Activated CD8-positive, alpha-beta memory T cell treated with anti-CD3 and anti-CD28 coated beads, Interleukin-2, amount 10 ng/mL, durations not matched to agents 7 days and 5 days (primary cell): ENCODE measurements at regions of chr1 and their contacts with region 1.

Region 1: GRCh38 chr1:12124693-12125421 is 41.9 kb upstream of the TNFRSF1B start:
- DNase-seq: peak; percentile 83
- ATAC-seq: peak; percentile 69
- H3K4me3 Mint-ChIP-seq: no peak overlapping the region
- H3K27ac Mint-ChIP-seq: peak overlapping the region; percentile 55
- H3K4me1 Mint-ChIP-seq: peaks cover 17% of the 10 kb centered on the region
- H3K27me3 Mint-ChIP-seq: no peaks in the 10 kb centered on the region

Region 2: DNA sequence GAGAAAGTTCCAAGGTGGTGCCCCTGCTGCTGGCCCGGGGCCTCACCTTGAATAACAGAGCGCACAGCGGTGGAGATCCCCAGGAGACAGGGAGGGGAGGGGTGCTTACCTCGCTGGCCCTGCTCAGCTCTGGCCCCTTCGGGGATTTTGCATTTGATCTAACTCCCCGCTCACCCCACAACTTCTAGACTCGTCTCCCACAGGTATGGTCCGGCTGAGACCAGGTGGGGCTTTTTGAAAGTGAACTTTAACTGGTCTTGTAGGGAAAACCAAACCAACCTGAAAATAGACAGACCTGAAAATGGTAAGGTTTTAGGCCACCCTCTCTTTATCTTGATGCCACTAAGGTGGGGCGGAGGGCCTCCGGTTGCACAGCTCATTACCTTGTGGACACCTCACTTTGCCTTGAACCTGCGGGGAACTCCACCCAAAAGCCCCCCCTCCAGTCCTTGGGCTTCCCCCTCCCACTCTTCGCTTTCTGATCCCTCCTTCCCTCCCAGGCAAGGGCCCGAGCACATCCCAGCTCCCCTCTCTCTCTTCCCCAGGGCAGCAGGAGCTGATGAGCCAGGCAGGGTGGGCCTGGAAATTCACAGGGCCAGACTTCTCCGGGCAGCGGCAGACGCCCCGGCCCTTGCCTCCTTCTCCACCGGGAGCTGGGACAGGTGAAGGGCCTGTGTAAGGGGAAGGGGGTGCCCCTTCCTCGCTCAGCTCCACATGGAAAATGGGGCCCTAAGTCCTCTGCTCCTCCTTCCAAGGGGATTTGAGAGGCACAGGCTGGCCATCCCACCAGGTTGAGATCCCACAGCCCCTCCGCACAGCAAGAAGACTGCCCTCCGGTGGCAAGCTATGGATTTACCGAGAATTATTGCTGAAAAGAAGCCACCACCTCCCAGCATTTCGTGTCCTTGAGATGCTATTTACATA is 45.7 kb before region 1 on chr1:
- CTCF ChIA-PET with region 1: interaction called, 10 read pairs
- DNase-seq: peak; percentile 71
- ATAC-seq: peak; percentile 57
- H3K4me3 Mint-ChIP-seq: no peak overlapping the region
- H3K27ac Mint-ChIP-seq: no peak overlapping the region
- H3K4me1 Mint-ChIP-seq: peaks cover 57% of the 10 kb centered on the region
- H3K27me3 Mint-ChIP-seq: peaks cover 6% of the 10 kb centered on the region

Region 3: GRCh38 chr1:12113433-12114339 is 11.2 kb before region 1 on chr1:
- CTCF ChIA-PET with region 1: interaction called, 17 read pairs
- DNase-seq: peak; percentile 47
- ATAC-seq: peak; percentile 64
- H3K4me3 Mint-ChIP-seq: no peak overlapping the region
- H3K27ac Mint-ChIP-seq: peak overlapping the region; percentile 66
- H3K4me1 Mint-ChIP-seq: peaks cover 15% of the 10 kb centered on the region
- H3K27me3 Mint-ChIP-seq: no peaks in the 10 kb centered on the region

Region 4: GRCh38 chr1:12161662-12162458 is 37.0 kb after region 1 on chr1:
- CTCF ChIA-PET with region 1: interaction called, 27 read pairs
- DNase-seq: peak; percentile 95
- ATAC-seq: peak; percentile 87
- H3K4me3 Mint-ChIP-seq: peak overlapping the region; percentile 44
- H3K27ac Mint-ChIP-seq: peak overlapping the region; percentile 99
- H3K4me1 Mint-ChIP-seq: peaks cover 83% of the 10 kb centered on the region
- H3K27me3 Mint-ChIP-seq: no peaks in the 10 kb centered on the region

Region 5: DNA sequence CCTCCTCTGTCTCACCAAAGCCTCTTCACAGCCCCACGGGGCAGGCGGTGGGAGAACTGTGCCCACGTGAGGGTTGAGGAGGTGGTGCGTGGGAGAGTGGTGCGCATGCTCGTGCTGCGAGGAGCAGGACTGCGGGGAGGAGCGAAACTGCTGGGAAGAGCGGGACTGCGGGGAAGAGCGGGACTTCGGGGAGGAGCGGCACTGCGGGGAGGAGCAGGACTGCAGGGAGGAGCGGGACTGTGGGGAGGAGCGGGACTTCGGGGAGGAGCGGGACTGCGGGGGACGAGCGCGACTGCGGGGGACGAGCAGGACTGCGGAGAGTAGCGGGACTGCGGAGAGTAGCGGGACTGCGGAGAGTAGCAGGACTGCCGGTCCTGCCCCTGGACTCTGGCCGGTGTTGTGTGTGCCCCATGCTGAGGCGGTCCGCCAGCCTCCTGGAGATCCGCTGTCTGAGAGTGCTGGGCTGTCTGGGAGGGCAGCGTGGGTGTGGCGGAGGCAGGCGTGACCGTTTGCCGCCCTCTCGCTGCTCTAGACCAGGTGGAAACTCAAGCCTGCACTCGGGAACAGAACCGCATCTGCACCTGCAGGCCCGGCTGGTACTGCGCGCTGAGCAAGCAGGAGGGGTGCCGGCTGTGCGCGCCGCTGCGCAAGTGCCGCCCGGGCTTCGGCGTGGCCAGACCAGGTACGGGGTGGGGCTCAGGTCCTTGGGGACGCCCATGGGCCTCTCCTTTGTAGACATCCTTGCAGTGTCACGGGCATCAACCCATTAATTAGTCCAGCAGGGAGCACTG is 66.6 kb after region 1 on chr1:
- CTCF ChIA-PET with region 1: interaction called, 296 read pairs
- DNase-seq: no peak
- ATAC-seq: no peak
- H3K4me3 Mint-ChIP-seq: no peak overlapping the region
- H3K27ac Mint-ChIP-seq: no peak overlapping the region
- H3K4me1 Mint-ChIP-seq: peaks cover 49% of the 10 kb centered on the region
- H3K27me3 Mint-ChIP-seq: no peaks in the 10 kb centered on the region

Region 6: GRCh38 chr1:12229835-12230548 is 105.1 kb after region 1 on chr1 and contains the start of gene VPS13D:
- CTCF ChIA-PET with region 1: interaction called, 69 read pairs
- DNase-seq: peak; percentile 86
- ATAC-seq: peak; percentile 98
- H3K4me3 Mint-ChIP-seq: peak within 1 kb of the TSS; percentile 81
- H3K27ac Mint-ChIP-seq: peak within 1 kb of the TSS; percentile 61
- H3K4me1 Mint-ChIP-seq: peaks cover 17% of the 10 kb centered on the region
- H3K27me3 Mint-ChIP-seq: peaks cover 2% of the 10 kb centered on the region
- total RNA-seq, gene VPS13D: 34.6 to 38.3 TPM

Region 7: GRCh38 chr1:12619792-12620487 is 495.1 kb after region 1 on chr1:
- CTCF ChIA-PET with region 1: interaction called, 23 read pairs
- DNase-seq: peak; percentile 87
- ATAC-seq: peak; percentile 52
- H3K4me3 Mint-ChIP-seq: peak overlapping the region; percentile 95
- H3K27ac Mint-ChIP-seq: peak overlapping the region; percentile 64
- H3K4me1 Mint-ChIP-seq: peaks cover 50% of the 10 kb centered on the region
- H3K27me3 Mint-ChIP-seq: peaks cover 8% of the 10 kb centered on the region